CD8-positive, alpha-beta T cell (primary cell): ENCODE measurements at regions of chr16 and their contacts with region 1.

Region 1: DNA sequence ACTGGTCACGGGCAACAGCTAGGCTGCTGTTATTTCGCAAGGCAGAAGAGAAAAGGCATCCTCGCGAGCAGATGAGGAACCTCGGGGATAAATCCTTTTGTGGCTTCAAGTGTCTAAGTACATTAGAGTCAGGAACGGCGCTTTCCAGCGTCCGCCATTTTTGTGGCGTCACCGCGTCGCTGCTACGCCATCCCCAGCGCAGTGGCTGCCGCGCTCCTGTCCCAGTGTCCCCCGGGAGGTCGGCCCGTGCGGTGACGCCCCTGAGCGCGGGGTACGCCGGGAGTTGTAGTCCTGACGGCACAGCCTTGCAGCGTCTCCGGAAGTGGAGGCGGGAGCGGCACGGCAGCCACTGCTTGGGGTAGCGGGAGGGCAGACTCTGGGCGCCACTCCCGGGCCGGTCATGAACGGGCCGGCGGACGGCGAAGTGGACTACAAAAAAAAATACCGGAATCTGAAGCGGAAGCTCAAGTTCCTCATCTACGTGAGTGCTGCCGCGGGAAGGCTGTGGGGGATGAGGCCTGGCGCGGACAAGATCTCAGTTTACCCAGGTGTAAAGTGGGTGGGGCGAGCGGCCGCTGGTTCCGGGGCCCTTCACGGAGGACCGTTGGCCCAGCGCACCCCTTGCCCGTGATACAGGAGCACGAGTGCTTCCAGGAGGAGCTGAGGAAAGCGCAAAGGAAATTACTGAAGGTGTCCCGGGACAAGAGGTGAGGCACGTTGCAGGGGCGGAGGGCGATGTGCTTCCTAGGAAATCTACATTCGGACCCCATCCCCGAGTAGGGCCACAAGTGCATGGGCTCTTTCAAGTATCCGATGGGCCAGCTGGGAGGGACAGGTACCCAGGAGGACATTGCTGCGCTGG is at the start of gene INO80E:
- DNase-seq: peak; percentile 98 to 100 (median 99)
- ATAC-seq: peak; percentile 96
- H3K4me3 ChIP-seq: peak within 1 kb of the TSS; percentile 93 to 100
- H3K4me3 Mint-ChIP-seq: peak within 1 kb of the TSS; percentile 94
- H3K27ac ChIP-seq: peak within 1 kb of the TSS; percentile 99
- H3K27ac Mint-ChIP-seq: peak within 1 kb of the TSS; percentile 97
- H3K4me1 ChIP-seq: peaks cover 14% of the 10 kb centered on the region
- H3K4me1 Mint-ChIP-seq: peaks cover 39% of the 10 kb centered on the region
- H3K27me3 ChIP-seq: no peaks in the 10 kb centered on the region
- H3K27me3 Mint-ChIP-seq: no peaks in the 10 kb centered on the region
- CTCF ChIP-seq: no peak
- total RNA-seq, gene INO80E: 49.8 to 59.4 TPM

Region 2: DNA sequence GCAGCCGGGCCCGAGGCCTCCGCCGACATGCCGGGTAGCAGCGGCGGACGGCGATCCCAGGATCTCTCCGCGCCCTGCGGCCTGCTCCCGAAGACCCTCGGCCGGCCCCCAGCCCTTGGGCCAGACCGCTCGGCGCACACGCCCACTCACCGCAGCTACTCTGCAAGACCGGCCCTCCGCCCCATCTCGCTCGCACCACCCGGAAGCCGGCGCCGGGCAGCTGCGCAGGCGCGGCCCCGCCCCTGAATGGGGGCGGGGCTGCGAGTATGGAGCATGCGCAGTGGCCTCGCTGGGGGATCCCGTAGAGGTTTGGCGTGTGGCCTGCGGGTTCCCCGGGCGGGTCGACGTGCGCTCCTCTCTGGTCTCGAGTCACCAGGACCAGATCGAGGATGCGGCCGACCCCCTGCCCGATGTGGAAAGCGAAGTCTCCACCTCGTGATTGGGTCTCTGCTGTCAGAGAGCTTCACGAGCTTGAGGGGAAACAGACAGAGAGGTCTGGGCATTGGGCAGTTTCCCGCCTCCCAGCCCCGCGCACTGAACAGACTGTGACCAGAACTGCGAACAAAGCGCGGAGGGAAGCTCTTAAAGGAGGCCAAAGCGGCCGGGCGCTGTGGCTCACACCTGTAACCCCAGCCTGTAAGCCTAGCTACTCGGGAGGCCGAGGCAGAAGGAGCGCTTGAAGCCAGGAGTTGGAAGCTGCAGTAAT is 70.0 kb before region 1 on chr16 and contains the start of gene KCTD13:
- CTCF ChIA-PET with region 1: no interaction called
- POLR2A ChIA-PET with region 1: interaction called, 3 read pairs
- intact Hi-C with region 1: loop called (anchors 1 kb)
- DNase-seq: peak; percentile 82 to 98 (median 88)
- ATAC-seq: peak; percentile 93
- H3K4me3 ChIP-seq: peak within 1 kb of the TSS; percentile 90 to 92
- H3K4me3 Mint-ChIP-seq: peak within 1 kb of the TSS; percentile 96
- H3K27ac ChIP-seq: peak within 1 kb of the TSS; percentile 73
- H3K27ac Mint-ChIP-seq: peak within 1 kb of the TSS; percentile 95
- H3K4me1 ChIP-seq: peaks cover 21% of the 10 kb centered on the region
- H3K4me1 Mint-ChIP-seq: peaks cover 37% of the 10 kb centered on the region
- H3K27me3 ChIP-seq: no peaks in the 10 kb centered on the region
- H3K27me3 Mint-ChIP-seq: no peaks in the 10 kb centered on the region
- CTCF ChIP-seq: no peak
- total RNA-seq, gene KCTD13: 39.7 to 41.6 TPM

Region 3: DNA sequence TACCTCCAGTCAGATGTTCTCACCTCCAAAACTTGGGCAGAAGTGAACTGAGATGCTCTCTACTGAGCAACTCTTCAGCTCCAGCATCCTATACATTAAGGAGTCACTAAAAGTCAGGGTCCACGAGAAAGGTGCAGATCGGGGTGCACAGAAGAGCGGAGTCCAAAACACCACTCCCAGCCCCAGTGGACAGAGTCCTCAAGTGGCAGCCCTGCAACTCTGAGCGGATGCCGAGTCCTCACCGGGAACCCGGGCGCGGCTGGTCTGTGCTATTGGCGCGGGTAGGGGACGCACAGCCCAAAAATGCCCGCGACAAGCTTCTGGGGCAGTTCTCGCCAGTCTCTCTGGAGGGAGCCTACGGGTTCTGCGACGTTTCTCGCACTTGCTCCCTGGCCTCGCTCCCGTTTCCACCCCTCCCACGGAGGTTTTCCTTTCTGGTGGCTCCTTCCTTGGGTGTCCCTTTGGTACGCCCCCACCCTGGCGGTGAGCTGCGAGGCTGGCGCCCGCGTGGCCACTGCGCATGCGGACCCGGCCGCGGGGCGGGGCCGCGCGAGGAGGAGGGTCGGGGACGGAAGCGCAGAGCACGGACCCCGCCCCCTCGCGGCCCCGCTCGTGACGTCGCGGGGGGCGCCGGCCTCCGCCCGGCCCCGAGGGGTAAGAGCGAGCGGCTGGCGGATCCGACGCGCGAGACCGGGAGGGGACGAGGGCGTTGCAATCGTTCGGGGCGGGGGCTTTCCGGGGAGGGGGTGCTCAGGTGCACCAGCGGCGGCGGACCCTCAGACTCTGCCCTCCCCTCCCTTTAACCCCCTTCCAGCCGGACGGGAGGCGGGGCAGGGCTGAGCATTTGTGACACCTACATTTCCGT is 34.4 kb before region 1 on chr16 and contains the start of gene TMEM219:
- CTCF ChIA-PET with region 1: no interaction called
- POLR2A ChIA-PET with region 1: interaction called, 7 read pairs
- intact Hi-C with region 1: loop called (anchors 1 kb)
- DNase-seq: peak; percentile 87 to 98 (median 95)
- ATAC-seq: peak; percentile 90
- H3K4me3 ChIP-seq: peak within 1 kb of the TSS; percentile 77 to 90
- H3K4me3 Mint-ChIP-seq: peak within 1 kb of the TSS; percentile 89
- H3K27ac ChIP-seq: peak within 1 kb of the TSS; percentile 75 to 88
- H3K27ac Mint-ChIP-seq: peak within 1 kb of the TSS; percentile 95
- H3K4me1 ChIP-seq: peaks cover 19% of the 10 kb centered on the region
- H3K4me1 Mint-ChIP-seq: peaks cover 26% of the 10 kb centered on the region
- H3K27me3 ChIP-seq: no peaks in the 10 kb centered on the region
- H3K27me3 Mint-ChIP-seq: no peaks in the 10 kb centered on the region
- CTCF ChIP-seq: no peak
- total RNA-seq, gene TMEM219: 41.5 to 50.2 TPM

Region 4: DNA sequence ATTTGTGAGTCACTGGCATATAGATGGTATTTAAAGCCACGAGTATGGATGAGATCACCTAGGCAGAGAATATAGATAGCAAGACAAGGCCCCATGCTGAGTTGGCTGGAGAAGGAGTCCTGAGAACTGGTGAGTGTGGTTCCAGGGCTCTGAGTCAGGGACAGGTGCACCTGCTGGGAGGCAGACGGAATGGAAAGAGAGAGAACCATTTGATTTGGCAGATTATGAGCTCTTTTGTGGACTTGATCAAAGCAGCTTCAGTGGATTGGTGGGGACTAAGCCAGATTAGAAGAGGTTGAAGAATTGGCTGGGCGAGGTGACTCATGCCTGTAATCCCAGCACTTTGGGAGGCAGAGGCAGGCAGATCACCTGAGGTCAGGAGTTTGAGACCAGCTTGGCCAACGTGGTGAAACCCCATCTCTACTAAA is 22.6 kb after region 1 on chr16:
- CTCF ChIA-PET with region 1: no interaction called
- POLR2A ChIA-PET with region 1: no interaction called
- intact Hi-C with region 1: loop called in 1 of 2 experiments (anchors 1 kb)
- DNase-seq: no peak
- ATAC-seq: no peak
- H3K4me3 ChIP-seq: no peak overlapping the region
- H3K4me3 Mint-ChIP-seq: no peak overlapping the region
- H3K27ac ChIP-seq: no peak overlapping the region
- H3K27ac Mint-ChIP-seq: no peak overlapping the region
- H3K4me1 ChIP-seq: peaks cover 7% of the 10 kb centered on the region
- H3K4me1 Mint-ChIP-seq: peaks cover 5% of the 10 kb centered on the region
- H3K27me3 ChIP-seq: peaks cover 0 to 3% of the 10 kb centered on the region in 2 experiments
- H3K27me3 Mint-ChIP-seq: no peaks in the 10 kb centered on the region
- CTCF ChIP-seq: no peak